ENCODE measurements at regions of chr2 and their contacts with region 1.

Region 1: GRCh38 chr2:176096986-176097819 is 2.4 kb upstream of the HOXD12 start:
- DNase-seq: peak; percentile 86 to 92 (median 90)
- H3K4me3 ChIP-seq: peak overlapping the region in 2 of 3 donors; percentile 32 to 62
- H3K27ac ChIP-seq: no peak overlapping the region
- H3K4me1 ChIP-seq: peaks cover 0 to 9% (median 5%) of the 10 kb centered on the region in 3 donors
- H3K27me3 ChIP-seq: peaks cover 74% of the 10 kb centered on the region
- CTCF ChIP-seq: peak; percentile 78

Region 2: DNA sequence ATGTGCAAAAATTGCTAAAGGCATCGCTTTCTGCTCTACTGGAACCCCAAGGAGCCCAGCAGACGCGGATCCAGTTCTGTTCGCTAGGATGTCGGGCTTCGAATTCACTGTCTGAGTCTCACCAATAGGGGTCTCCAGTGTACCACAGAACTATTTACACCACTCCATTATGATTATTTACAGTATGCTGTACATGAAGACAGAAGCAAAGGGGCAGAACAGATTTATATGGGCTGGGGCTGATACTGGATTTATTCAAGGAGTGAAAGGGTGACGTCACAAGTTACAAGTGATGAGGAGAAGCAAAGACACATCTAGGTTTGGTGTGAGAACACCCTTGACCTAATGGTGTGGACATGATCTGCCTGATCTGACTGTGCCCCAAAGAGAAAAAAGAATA is 730.4 kb before region 1 on chr2:
- intact Hi-C with region 1: loop called (anchors 5 kb)
- DNase-seq: peak in 4 of 5 donors; percentile 60 to 80 (median 71)
- H3K4me3 ChIP-seq: no peak overlapping the region
- H3K27ac ChIP-seq: no peak overlapping the region
- H3K4me1 ChIP-seq: no peaks in the 10 kb centered on the region
- H3K27me3 ChIP-seq: peaks cover 2% of the 10 kb centered on the region
- CTCF ChIP-seq: peak; percentile 71

Region 3: DNA sequence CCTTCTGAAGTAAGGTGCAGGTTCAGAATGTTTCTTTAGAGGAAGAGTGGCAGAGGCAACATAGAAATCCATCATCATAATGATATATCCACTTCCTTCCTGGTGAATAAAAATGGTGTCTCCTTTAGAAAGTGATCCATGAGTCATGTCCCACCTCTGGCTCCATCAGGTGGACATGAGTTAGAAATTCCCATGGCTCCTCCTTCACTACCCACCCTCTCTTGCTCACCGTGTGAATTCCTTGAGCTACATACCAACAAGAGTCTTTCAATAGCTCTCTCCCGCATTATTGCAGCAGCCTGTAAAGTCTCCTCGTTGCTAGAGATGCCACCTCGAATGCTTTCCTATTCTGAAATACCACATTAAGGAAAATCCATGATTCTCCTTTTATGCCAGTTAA is 412.7 kb before region 1 on chr2:
- intact Hi-C with region 1: loop called (anchors 10 kb)
- DNase-seq: peak in 1 of 5 donors; percentile 6
- H3K4me3 ChIP-seq: no peak overlapping the region
- H3K27ac ChIP-seq: no peak overlapping the region
- H3K4me1 ChIP-seq: no peaks in the 10 kb centered on the region
- H3K27me3 ChIP-seq: no peaks in the 10 kb centered on the region
- CTCF ChIP-seq: no peak

Region 4: GRCh38 chr2:176534798-176535466 is 437.7 kb after region 1 on chr2:
- intact Hi-C with region 1: no loop called
- DNase-seq: peak in 3 of 5 donors; percentile 37 to 71 (median 43)
- H3K4me3 ChIP-seq: no peak overlapping the region
- H3K27ac ChIP-seq: peak overlapping the region; percentile 33 to 53
- H3K4me1 ChIP-seq: peaks cover 0 to 5% (median 2%) of the 10 kb centered on the region in 3 donors
- H3K27me3 ChIP-seq: no peaks in the 10 kb centered on the region
- CTCF ChIP-seq: no peak

Region 5: GRCh38 chr2:176845694-176846093 is 748.5 kb after region 1 on chr2:
- intact Hi-C with region 1: no loop called
- DNase-seq: no peak
- H3K4me3 ChIP-seq: no peak overlapping the region
- H3K27ac ChIP-seq: no peak overlapping the region
- H3K4me1 ChIP-seq: no peaks in the 10 kb centered on the region
- H3K27me3 ChIP-seq: no peaks in the 10 kb centered on the region
- CTCF ChIP-seq: no peak

Measured in kidney (tissue), 22 donors.